ENCODE measurements at regions of chr15 and their contacts with region 1.

Region 1: GRCh38 chr15:53903129-53903528 is 75.1 kb upstream of the UNC13C start:
- DNase-seq: no peak
- H3K4me3 ChIP-seq: no peak overlapping the region
- H3K27ac ChIP-seq: no peak overlapping the region
- H3K4me1 ChIP-seq: no peaks in the 10 kb centered on the region
- H3K27me3 ChIP-seq: no peaks in the 10 kb centered on the region
- CTCF ChIP-seq: no peak
- EP300 ChIP-seq: no peak
- POLR2A ChIP-seq: no peak

Region 2: DNA sequence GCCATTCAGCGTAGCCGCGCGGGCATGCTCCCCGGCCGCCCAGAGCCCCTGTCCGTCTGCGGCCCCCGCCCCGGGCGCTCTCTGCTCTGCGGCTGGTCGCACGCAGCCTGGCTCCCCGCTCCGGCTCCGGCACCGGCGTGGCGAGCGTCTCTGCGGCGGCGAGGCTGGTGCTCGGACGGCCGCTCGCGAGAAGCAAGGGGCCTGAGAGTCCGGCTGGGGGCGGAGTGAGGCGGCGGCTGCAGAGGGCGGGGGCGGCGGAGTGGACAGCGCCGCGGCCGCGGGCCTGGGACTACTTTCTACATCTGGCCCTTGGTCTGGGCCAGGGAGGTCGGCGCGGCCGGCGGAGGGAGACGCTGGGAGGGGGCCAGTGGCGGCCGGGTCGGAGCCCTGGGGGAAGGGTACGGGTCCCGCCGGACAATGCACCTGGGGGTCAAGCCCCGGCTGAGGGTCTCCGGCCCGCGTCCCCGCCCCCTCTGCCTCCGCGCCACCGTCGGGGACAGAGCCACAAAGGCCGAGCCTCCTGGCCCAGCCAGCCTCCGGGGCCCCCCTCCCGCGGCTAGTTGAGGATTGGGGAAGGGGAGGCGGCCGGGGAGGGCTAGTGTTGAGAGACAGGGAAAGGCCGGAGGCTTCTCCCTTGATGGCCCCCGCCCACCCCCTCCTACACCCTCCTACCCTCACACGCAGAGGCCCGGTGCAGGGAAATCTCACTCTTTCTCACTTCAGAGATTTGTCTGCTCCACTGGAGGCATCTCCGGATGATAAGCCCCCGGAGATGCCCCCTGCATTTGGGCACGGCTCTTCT is 1840.0 kb after region 1 on chr15 and contains the start of gene PRTG:
- intact Hi-C with region 1: loop called in 1 of 4 experiments (anchors 5 kb)
- DNase-seq: peak; percentile 77 to 90 (median 81)
- H3K4me3 ChIP-seq: peak within 1 kb of the TSS; percentile 93
- H3K27ac ChIP-seq: peak within 1 kb of the TSS; percentile 65 to 82
- H3K4me1 ChIP-seq: peaks cover 3% of the 10 kb centered on the region
- H3K27me3 ChIP-seq: no peaks in the 10 kb centered on the region
- CTCF ChIP-seq: no peak
- EP300 ChIP-seq: no peak
- POLR2A ChIP-seq: peak; percentile 10
- total RNA-seq, gene PRTG: 3.3 to 9.4 (median 6.7) TPM

Measured in ovary (tissue), 10 donors.